ENCODE measurements at regions of chr1 and their contacts with region 1.

Region 1: GRCh38 chr1:74363220-74363619 is 128.0 kb downstream of the TNNI3K start:
- DNase-seq: peak; percentile 77

Region 2: DNA sequence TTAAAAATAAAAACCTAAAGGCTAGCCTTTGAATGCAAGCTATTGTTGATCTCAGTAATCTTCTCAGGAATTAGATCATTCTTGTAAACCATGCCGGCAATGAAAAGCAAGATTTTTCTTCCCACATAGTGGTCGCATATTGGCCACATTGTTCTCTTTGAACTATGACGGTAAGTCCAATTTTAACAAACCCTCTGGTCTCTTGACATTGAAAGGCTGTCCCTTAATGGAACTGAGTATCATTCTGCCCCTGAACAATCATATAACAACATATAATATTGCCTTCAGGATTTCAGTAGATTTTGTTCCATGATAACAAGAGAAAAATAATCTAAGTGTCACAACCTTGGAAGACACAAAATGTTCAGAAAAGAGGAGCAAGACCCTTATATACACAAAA is 126.8 kb before region 1 on chr1:
- intact Hi-C with region 1: loop called (anchors 5 kb)
- DNase-seq: no peak

Region 3: DNA sequence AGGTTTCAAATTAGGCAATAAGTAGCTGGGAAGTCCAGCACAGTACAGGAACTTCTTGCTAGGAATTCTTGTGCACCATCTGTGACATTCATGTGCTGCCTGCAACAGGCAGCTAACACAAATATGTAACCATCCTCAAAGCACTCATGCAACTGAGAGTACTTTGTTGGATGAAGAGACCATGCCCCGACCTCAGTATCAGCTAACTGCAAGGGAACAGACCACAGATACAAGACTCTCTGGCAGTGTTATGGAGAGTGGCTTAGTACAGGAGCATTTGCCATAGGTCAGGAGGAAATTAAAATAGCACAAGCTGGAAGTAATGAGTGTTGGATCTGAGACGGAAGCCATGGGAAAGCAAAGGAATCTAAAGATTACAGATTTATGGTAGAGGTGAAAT is 25.6 kb after region 1 on chr1:
- intact Hi-C with region 1: no loop called
- DNase-seq: no peak

Measured in cardiac septum (tissue), 1 donor.